PC-9 (cell line): ENCODE measurements at regions of chr7 and their contacts with region 1.

Region 1: GRCh38 chr7:16657656-16658279 is 11.8 kb downstream of the BZW2 start:
- DNase-seq: peak; percentile 79 to 83
- H3K4me3 ChIP-seq: no peak overlapping the region
- H3K27ac ChIP-seq: peak overlapping the region; percentile 47
- H3K4me1 ChIP-seq: peaks cover 58% of the 10 kb centered on the region
- H3K27me3 ChIP-seq: no peaks in the 10 kb centered on the region
- CTCF ChIP-seq: no peak

Region 2: DNA sequence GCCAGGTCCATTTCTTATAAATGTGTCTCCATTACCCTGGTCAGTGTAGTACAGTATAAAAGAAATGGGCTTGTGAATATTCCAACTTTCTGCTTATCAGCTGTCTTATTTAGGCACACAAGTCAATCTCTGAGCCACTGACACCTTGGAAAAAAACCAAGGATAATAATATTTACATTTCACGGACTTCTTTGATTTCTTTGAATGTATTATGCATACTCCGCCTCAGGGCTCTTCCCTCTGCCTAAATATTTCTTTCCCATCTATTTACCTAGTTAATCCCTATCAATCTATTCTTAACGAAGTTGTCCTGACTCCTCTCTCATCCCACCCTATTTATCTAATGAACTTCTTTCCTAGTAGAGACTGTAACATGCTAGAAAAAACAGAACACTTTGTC is 490.2 kb before region 1 on chr7:
- CTCF ChIA-PET with region 1: no interaction called
- POLR2A ChIA-PET with region 1: no interaction called
- intact Hi-C with region 1: no loop called
- DNase-seq: no peak
- H3K4me3 ChIP-seq: no peak overlapping the region
- H3K27ac ChIP-seq: no peak overlapping the region
- H3K4me1 ChIP-seq: peaks cover 9% of the 10 kb centered on the region
- H3K27me3 ChIP-seq: no peaks in the 10 kb centered on the region
- CTCF ChIP-seq: no peak

Region 3: DNA sequence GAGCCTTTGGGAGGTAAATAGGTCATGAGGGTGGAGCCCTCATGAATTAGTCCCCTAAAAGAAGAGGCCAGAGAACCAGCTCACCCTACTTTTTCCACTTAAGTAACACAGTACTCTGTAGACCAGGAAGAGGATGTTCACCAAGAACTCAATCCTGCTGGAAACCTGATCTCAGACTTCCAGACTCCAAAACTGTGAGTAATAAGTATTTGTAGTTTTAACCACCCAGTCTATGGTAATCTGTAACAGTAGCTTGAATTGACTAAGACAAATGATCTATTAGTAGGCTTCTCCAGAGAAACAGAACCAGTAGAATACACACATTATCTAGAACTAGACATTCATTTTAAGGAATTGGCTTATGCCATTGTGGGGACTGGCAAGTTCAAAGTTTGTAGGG is 63.7 kb before region 1 on chr7:
- CTCF ChIA-PET with region 1: interaction called, 10 read pairs
- POLR2A ChIA-PET with region 1: no interaction called
- intact Hi-C with region 1: no loop called
- DNase-seq: no peak
- H3K4me3 ChIP-seq: no peak overlapping the region
- H3K27ac ChIP-seq: no peak overlapping the region
- H3K4me1 ChIP-seq: 0 out of 2 replicates have a peak, but pooled peaks cover 3% of the 10 kb centered on the region
- H3K27me3 ChIP-seq: no peaks in the 10 kb centered on the region
- CTCF ChIP-seq: no peak

Region 4: GRCh38 chr7:16604054-16604453 is 53.7 kb before region 1 on chr7:
- CTCF ChIA-PET with region 1: no interaction called
- POLR2A ChIA-PET with region 1: interaction called, 18 read pairs
- intact Hi-C with region 1: no loop called
- DNase-seq: no peak
- H3K4me3 ChIP-seq: no peak overlapping the region
- H3K27ac ChIP-seq: no peak overlapping the region
- H3K4me1 ChIP-seq: no peaks in the 10 kb centered on the region
- H3K27me3 ChIP-seq: no peaks in the 10 kb centered on the region
- CTCF ChIP-seq: peak; percentile 36; the same call in 1 of the 2 replicates

Region 5: DNA sequence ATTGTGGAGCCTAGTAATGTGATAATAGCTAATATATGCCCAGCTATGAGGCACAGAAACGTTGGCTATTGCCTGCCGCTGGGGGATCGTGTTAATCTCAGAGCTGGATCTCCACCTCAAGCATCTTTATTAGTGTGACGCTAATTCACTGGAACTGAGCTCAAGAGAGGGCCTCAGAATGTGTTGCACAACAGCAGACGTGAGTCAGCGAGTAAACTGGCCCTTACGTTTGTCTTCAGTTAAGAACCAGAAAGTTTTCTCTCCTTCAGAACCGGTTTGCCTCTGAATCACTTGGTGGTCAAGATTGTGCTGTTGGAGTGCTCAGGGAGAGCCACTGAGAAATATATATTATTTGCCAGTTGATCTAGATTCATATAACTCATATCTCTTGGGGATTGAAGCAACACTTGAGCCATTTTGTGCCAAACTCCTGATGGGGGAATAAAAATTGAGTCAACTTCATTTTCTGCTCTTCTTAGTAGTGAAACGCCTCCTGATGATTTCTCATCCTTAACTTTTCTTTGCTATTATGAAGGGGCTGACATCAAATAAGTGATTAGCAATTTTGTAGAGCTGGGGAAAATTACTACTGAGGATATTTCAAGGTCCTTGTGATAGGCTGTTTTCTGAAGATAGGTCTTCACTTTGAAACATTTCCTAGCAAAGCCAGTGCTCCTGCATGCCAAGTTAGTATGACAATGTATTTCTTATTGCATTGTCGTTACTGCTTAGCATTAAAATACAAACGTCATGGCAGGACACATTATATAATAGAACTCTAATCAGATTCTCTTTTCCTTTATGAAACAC is 10.5 kb after region 1 on chr7:
- CTCF ChIA-PET with region 1: interaction called, 3 read pairs
- POLR2A ChIA-PET with region 1: interaction called, 12 read pairs
- intact Hi-C with region 1: no loop called
- DNase-seq: peak; percentile 88 to 100
- H3K4me3 ChIP-seq: peak overlapping the region; percentile 19; the same call in 1 of the 2 replicates
- H3K27ac ChIP-seq: peak overlapping the region; percentile 82
- H3K4me1 ChIP-seq: peaks cover 36% of the 10 kb centered on the region
- H3K27me3 ChIP-seq: no peaks in the 10 kb centered on the region
- CTCF ChIP-seq: peak; percentile 54; the same call in 1 of the 2 replicates

Region 6: DNA sequence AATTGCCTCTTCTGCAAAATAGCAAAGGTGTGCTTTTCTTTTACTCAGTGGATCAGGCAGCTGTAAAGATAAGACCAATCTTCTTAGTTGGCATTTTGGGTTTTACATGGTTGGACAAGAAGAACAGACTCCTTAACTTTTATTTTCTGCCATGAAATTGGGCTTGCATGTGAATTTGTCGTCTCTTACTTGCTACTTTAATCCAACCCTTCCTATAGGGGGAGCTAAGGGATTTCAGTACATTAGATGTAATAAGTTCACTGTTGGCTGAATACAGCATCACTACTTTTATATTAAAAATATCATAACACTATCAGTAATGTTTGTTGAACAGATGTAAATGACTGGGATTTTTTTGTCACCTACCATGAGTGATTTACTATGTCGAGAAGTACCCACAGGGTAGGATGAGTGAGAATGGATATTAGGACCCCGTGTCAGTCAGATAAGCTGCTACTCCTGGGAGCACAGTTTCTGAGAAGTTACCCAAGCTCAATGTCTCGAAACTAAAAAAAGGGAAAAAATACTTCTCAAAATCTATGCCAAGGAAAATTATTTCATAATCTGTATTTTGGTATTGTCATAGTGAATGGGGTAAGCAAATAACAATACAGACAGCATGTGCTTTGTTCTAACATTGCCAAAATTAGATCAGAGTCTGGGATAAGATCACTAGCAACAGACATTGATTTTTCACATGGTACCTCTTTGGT is 351.4 kb after region 1 on chr7:
- CTCF ChIA-PET with region 1: no interaction called
- POLR2A ChIA-PET with region 1: interaction called, 10 read pairs
- intact Hi-C with region 1: no loop called
- DNase-seq: no peak
- H3K4me3 ChIP-seq: no peak overlapping the region
- H3K27ac ChIP-seq: no peak overlapping the region
- H3K4me1 ChIP-seq: peaks cover 21% of the 10 kb centered on the region
- H3K27me3 ChIP-seq: no peaks in the 10 kb centered on the region
- CTCF ChIP-seq: peak; percentile 62